Naive thymus-derived CD4-positive, alpha-beta T cell (primary cell): ENCODE measurements at regions of chr11 and their contacts with region 1.

Region 1: DNA sequence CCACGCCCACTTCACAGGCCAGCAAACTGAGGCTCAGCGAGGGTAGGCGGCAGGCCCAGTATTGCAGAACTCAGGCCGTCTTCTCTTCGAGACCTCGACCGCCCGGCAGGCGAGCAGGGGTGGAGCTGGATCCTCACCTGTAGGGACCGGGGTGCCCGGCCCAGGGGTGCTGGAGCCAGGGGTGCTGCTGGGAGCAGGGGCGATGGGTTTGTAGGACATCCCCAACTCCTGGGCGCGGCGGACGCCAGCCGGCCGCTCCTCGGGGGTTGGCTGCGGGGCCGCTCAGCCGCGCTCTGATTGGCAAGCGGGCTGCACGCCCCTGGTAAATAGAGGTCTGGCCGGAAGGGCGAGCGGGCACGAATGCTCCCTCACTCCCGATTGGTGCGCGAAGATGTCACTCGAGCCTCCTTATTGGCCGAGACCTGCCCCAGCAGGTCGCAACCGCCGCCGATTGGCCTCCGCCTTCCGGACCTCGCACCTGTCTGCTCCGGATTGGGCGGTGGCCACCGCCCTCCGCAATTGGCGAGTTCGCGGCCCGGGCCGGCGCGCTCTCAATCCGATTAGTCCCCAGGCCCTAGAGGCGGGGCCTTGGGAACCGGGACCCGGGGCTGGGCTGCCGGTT is at the start of gene CDK2AP2:
- DNase-seq: peak in 8 of 9 donors; percentile 89 to 97 (median 96)
- ATAC-seq: peak; percentile 81
- H3K4me3 ChIP-seq: peak within 1 kb of the TSS; percentile 91
- H3K4me3 Mint-ChIP-seq: peak within 1 kb of the TSS; percentile 89 to 95 (median 90)
- H3K27ac ChIP-seq: peak within 1 kb of the TSS; percentile 96
- H3K27ac Mint-ChIP-seq: peak within 1 kb of the TSS; percentile 87 to 98 (median 96)
- H3K4me1 ChIP-seq: peaks cover 40 to 43% of the 10 kb centered on the region in 2 donors
- H3K4me1 Mint-ChIP-seq: peaks cover 26 to 45% (median 36%) of the 10 kb centered on the region in 7 donors
- H3K27me3 ChIP-seq: no peaks in the 10 kb centered on the region
- H3K27me3 Mint-ChIP-seq: peaks cover 0 to 18% (median 0%) of the 10 kb centered on the region in 5 donors
- total RNA-seq, gene CDK2AP2: 31.0 to 168 (median 61.9) TPM

Region 2: DNA sequence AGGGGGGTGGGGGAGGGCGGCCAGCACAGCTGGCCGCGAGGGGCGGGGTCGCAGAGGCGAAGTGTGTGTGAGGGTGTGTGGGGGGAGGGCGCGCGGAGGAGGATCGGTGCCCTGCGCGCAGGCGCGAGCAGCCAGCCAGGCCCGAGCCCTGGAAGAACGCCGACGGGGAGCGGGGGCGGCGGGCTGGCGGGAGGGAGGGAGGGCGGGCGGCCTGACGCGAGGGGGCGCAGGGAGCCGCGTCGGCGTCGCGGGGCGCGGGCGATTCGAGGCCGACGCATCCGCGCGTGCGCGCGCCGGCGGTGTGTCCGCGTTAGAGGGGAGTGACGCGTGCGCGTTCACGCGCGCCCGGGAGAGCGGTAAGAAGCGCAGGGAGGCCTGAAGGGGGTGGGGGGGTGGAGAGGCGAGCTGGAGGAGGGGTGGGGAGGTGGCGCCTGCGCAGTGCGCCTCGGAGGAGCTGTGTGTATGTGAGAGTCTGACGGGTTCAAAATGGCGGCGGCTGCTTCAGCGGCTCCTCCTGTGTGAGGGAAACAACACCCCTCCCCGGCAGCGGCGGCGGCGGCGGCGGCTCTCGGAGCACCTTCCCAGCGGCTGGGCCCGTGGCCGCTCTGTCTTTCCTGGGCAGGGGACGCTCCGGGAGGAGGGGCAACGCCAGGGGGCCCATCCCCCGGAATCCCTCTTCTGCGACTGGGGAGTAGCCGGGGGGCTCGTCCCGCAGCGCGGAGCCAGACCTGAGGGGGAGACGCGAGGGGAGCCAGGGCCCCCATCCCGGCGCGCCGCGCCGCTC is 389.0 kb before region 1 on chr11 and contains the start of gene KDM2A:
- CTCF ChIA-PET with region 1: no interaction called
- POLR2A ChIA-PET with region 1: interaction called, 3 read pairs
- intact Hi-C with region 1: loop called in 1 of 2 experiments (anchors 1 kb)
- DNase-seq: peak; percentile 93 to 100 (median 98)
- ATAC-seq: peak; percentile 92
- H3K4me3 ChIP-seq: peak within 1 kb of the TSS; percentile 86
- H3K4me3 Mint-ChIP-seq: peak within 1 kb of the TSS; percentile 95 to 99 (median 98)
- H3K27ac ChIP-seq: peak within 1 kb of the TSS; percentile 98
- H3K27ac Mint-ChIP-seq: peak within 1 kb of the TSS; percentile 84 to 98 (median 95)
- H3K4me1 ChIP-seq: peaks cover 3 to 7% of the 10 kb centered on the region in 2 donors
- H3K4me1 Mint-ChIP-seq: peaks cover 25 to 48% (median 40%) of the 10 kb centered on the region in 7 donors
- H3K27me3 ChIP-seq: no peaks in the 10 kb centered on the region
- H3K27me3 Mint-ChIP-seq: peaks cover 0 to 5% (median 0%) of the 10 kb centered on the region in 5 donors
- total RNA-seq, gene KDM2A: 146 to 298 (median 233) TPM

Region 3: DNA sequence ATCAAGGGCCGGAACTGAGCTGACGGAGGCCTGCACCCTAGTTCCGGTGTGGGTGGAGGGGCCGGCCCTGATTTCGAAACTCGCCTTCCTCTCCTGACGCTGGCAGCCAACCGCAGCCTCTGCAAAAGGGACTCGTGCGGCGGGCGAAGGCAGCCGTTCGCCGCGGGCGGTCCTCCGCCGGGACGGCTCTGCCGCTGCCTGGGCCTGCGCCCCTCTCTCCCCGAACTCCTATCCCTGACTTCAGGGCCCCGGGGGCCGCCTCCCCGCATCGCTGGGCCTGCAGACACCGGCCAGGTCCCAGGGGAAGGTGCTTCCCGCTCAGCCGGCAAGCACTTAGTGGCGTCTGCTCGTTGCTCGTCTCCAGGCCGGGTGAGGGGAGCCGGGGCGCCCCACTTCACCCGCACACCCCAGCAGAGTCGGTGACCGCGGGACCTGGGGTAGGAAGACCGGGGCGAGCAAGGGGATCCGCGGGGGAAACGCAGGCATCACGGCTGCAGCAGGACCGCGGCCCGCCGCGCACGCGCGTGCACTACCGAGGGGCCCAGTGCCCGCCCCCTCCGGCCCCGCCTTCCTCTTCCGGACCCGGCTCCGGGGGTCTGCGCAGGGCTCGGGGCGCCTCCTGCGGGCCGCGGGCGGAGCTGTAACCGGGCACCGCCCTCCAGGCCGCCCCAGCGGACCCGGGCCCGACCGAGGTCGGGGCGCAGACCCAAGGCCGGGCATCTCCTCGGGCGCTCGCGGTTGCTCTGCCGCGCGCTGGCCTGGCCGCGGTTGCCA is 219.3 kb before region 1 on chr11:
- CTCF ChIA-PET with region 1: no interaction called
- POLR2A ChIA-PET with region 1: no interaction called
- intact Hi-C with region 1: loop called in 1 of 2 experiments (anchors 2 kb)
- DNase-seq: peak; percentile 84 to 94 (median 91)
- ATAC-seq: peak; percentile 82
- H3K4me3 ChIP-seq: peak overlapping the region; percentile 95
- H3K4me3 Mint-ChIP-seq: peak overlapping the region; percentile 76 to 98 (median 85)
- H3K27ac ChIP-seq: peak overlapping the region; percentile 81
- H3K27ac Mint-ChIP-seq: peak overlapping the region; percentile 95 to 99 (median 97)
- H3K4me1 ChIP-seq: peaks cover 54 to 60% of the 10 kb centered on the region in 2 donors
- H3K4me1 Mint-ChIP-seq: peaks cover 29 to 73% (median 57%) of the 10 kb centered on the region in 7 donors
- H3K27me3 ChIP-seq: no peaks in the 10 kb centered on the region
- H3K27me3 Mint-ChIP-seq: peaks cover 0 to 2% (median 0%) of the 10 kb centered on the region in 5 donors

Region 4: GRCh38 chr11:67420646-67421420 is 87.1 kb before region 1 on chr11:
- CTCF ChIA-PET with region 1: interaction called, 4 read pairs
- POLR2A ChIA-PET with region 1: interaction called, 7 read pairs
- intact Hi-C with region 1: loop called in 1 of 2 experiments (anchors 1 kb)
- DNase-seq: peak; percentile 97 to 100 (median 97)
- ATAC-seq: peak; percentile 96
- H3K4me3 ChIP-seq: peak overlapping the region; percentile 56
- H3K4me3 Mint-ChIP-seq: peak overlapping the region; percentile 74 to 92 (median 82)
- H3K27ac ChIP-seq: peak overlapping the region; percentile 77
- H3K27ac Mint-ChIP-seq: peak overlapping the region; percentile 69 to 98 (median 92)
- H3K4me1 ChIP-seq: peaks cover 42 to 49% of the 10 kb centered on the region in 2 donors
- H3K4me1 Mint-ChIP-seq: peaks cover 24 to 60% (median 53%) of the 10 kb centered on the region in 7 donors
- H3K27me3 ChIP-seq: no peaks in the 10 kb centered on the region
- H3K27me3 Mint-ChIP-seq: peaks cover 0 to 15% (median 0%) of the 10 kb centered on the region in 5 donors

Region 5: DNA sequence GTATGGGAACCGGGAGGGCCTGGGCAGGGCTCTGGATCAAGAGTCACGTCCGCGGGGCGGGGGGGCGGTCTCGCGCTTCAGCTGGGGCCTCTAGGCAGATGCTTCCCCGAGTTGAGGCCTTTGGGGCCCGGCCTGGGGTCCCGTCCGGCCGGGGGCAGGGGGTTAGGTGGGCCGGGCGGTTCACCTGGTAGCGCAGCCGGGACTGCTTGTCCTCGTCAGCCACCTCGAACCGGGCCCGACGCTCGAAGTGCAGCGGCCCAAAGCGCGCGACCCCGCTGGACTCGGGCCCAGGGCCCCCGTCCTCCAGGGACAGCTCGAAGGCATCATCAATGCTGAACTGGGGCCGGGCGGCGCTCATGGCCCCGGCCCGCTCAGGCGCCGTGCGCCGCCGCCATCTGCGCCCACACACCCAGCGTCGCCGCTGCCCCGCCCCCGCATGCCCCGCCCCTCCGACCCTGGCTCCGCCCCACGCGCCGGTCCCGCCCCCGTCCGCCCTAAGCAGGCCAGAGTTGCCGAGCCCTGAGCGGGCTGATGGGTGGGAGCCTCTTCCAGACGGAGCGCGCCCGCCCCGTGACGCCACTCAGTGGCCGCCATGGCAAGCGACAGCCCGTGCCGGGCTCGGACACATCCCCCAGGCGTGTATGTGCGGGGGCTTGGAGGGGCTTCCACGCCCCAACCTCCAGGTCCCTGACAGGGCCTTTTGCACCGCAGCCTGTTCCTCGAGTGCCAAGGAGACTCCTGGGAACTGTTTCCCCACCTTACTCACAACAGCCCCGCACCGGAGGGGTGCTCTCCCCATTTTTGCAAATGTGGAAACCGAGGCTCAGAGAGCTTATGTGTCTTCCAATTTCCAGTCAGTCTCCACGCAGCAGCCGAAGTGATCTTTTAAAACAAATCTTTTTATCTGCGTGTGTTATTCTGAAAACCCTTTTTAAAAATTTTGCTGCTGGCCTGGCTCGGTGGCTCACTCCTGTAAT is 38.9 kb before region 1 on chr11 and contains the start of gene TMEM134:
- CTCF ChIA-PET with region 1: no interaction called
- POLR2A ChIA-PET with region 1: interaction called, 27 read pairs
- intact Hi-C with region 1: loop called (anchors 1 kb)
- DNase-seq: peak; percentile 82 to 95 (median 89)
- ATAC-seq: peak; percentile 92
- H3K4me3 ChIP-seq: peak within 1 kb of the TSS; percentile 74
- H3K4me3 Mint-ChIP-seq: peak within 1 kb of the TSS; percentile 87 to 95 (median 90)
- H3K27ac ChIP-seq: peak within 1 kb of the TSS; percentile 94
- H3K27ac Mint-ChIP-seq: peak within 1 kb of the TSS; percentile 79 to 97 (median 88)
- H3K4me1 ChIP-seq: peaks cover 17 to 37% of the 10 kb centered on the region in 2 donors
- H3K4me1 Mint-ChIP-seq: peaks cover 23 to 42% (median 29%) of the 10 kb centered on the region in 7 donors
- H3K27me3 ChIP-seq: no peaks in the 10 kb centered on the region
- H3K27me3 Mint-ChIP-seq: peaks cover 0 to 6% (median 0%) of the 10 kb centered on the region in 5 donors
- total RNA-seq, gene TMEM134: 52.4 to 94.6 (median 70.6) TPM

Region 6: GRCh38 chr11:67497656-67498291 is 10.2 kb before region 1 on chr11:
- CTCF ChIA-PET with region 1: no interaction called
- POLR2A ChIA-PET with region 1: no interaction called
- intact Hi-C with region 1: no loop called
- DNase-seq: no peak
- ATAC-seq: no peak
- H3K4me3 ChIP-seq: no peak overlapping the region
- H3K4me3 Mint-ChIP-seq: no peak overlapping the region
- H3K27ac ChIP-seq: no peak overlapping the region
- H3K27ac Mint-ChIP-seq: no peak overlapping the region
- H3K4me1 ChIP-seq: no peaks in the 10 kb centered on the region
- H3K4me1 Mint-ChIP-seq: peaks cover 10 to 15% (median 11%) of the 10 kb centered on the region in 7 donors
- H3K27me3 ChIP-seq: no peaks in the 10 kb centered on the region
- H3K27me3 Mint-ChIP-seq: no peaks in the 10 kb centered on the region

Region 7: DNA sequence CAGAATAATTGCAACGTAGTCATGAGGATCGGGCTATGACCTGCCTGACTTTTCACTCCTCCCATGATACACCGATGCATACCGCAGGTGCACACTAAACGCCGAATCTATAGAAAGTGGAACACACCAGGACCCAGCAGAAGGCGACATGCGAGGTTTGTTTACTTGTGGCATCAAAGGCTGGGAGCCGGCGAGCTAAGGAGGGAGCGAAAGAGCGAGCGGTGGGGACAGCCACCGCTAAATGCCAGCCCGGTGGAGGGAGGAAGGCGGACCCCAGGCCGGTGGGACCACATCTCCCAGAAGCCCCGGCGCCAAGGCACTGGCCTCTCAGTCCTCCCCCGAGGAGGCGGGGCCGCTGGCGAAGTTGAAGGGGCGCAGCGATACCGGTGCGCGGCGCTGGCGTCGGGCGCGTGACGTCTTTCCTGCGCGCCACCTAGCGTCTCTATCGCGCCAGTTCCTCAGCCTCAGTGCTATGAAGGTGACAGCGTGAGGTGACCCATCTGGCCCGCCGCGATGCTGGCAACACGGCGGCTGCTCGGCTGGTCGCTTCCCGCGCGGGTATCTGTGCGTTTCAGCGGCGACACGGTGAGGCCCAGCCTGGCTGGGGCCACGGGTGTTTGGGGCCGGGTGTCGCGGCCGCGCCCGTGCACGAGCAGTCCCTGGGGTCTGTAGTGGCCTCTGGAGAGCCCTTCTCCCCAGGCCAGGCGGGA is 98.7 kb after region 1 on chr11 and contains the start of gene NDUFV1:
- CTCF ChIA-PET with region 1: no interaction called
- POLR2A ChIA-PET with region 1: no interaction called
- intact Hi-C with region 1: loop called (anchors 1 kb)
- DNase-seq: peak; percentile 90 to 96 (median 94)
- ATAC-seq: peak; percentile 100
- H3K4me3 ChIP-seq: peak within 1 kb of the TSS; percentile 97
- H3K4me3 Mint-ChIP-seq: peak within 1 kb of the TSS; percentile 85 to 99 (median 93)
- H3K27ac ChIP-seq: peak within 1 kb of the TSS; percentile 87
- H3K27ac Mint-ChIP-seq: peak within 1 kb of the TSS; percentile 78 to 96 (median 93)
- H3K4me1 ChIP-seq: peaks cover 8 to 19% of the 10 kb centered on the region in 2 donors
- H3K4me1 Mint-ChIP-seq: peaks cover 0 to 36% (median 14%) of the 10 kb centered on the region in 7 donors
- H3K27me3 ChIP-seq: no peaks in the 10 kb centered on the region
- H3K27me3 Mint-ChIP-seq: peaks cover 0 to 16% (median 10%) of the 10 kb centered on the region in 5 donors
- total RNA-seq, gene NDUFV1: 198 to 253 (median 212) TPM